ENCODE measurements at regions of chr6 and their contacts with region 1.

Region 1: DNA sequence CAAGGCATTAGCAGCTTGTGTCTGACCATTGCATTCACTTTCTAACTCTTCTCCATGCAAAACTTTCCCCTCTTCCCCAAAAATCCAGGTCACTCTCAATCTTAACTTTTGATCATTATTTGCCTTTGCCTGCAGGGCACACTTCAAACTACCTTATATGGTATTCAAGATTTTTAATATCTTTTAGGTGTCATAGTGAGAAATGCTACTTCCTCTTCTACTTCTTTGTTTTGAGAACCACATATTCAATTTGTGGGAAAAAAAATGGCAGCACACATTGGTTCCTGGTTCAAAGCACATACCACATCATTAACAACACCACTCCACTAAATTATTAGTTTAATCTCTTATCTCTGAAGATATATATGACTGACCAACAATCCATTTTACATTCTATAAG is 1267.0 kb upstream of the CITED2 start:
- DNase-seq: no peak

Region 2: DNA sequence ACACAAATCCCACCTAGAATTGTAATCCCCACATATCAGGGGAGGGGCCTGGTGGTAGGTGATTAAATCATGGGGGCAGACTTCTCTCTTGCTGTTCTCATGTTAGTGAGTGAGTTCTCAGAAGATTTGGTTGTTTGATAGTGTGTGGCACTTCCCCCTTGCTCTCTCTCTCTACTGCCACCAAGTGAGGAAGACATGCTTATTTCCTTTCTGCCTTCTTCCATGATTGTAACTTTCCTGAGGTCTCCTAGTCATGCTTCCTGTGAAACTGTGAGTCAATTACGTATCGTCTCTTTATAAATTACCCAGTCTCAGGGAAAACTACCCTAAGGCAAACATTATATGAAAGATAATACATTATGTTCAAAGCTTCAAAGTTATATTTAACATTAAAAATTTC is 30.5 kb after region 1 on chr6:
- intact Hi-C with region 1: loop called in 1 of 2 experiments (anchors 2 kb)
- DNase-seq: no peak

Measured in posterior vena cava (tissue), 2 donors.